Astrocyte of the cerebellum (primary cell): ENCODE measurements at regions of chr11 and their contacts with region 1.

Region 1: DNA sequence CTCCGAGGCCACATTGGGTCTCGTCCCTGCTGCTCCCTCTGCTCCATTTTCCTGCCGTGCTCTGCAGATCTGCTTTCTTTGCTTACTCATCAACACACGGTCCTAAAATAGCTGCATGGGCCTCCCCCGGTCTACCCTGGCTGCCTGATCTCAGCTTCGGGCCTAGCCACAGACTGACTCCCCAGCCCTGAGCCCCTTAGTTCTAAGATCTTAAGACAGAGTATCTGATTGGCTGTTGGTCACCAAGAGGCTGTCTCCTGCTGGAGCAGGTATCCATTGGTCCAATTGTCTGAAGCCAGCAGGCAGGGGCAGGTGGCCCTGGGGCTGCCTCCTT is 53.7 kb upstream of the NECTIN1 start:
- DNase-seq: no peak
- H3K4me3 ChIP-seq: no peak overlapping the region
- CTCF ChIP-seq: no peak

Region 2: GRCh38 chr11:119728651-119729580 is 53.8 kb before region 1 on chr11 and contains the start of gene NECTIN1:
- in situ Hi-C with region 1: no loop called
- DNase-seq: peak; percentile 48
- H3K4me3 ChIP-seq: peak within 1 kb of the TSS; percentile 64
- CTCF ChIP-seq: peak; percentile 77

Region 3: DNA sequence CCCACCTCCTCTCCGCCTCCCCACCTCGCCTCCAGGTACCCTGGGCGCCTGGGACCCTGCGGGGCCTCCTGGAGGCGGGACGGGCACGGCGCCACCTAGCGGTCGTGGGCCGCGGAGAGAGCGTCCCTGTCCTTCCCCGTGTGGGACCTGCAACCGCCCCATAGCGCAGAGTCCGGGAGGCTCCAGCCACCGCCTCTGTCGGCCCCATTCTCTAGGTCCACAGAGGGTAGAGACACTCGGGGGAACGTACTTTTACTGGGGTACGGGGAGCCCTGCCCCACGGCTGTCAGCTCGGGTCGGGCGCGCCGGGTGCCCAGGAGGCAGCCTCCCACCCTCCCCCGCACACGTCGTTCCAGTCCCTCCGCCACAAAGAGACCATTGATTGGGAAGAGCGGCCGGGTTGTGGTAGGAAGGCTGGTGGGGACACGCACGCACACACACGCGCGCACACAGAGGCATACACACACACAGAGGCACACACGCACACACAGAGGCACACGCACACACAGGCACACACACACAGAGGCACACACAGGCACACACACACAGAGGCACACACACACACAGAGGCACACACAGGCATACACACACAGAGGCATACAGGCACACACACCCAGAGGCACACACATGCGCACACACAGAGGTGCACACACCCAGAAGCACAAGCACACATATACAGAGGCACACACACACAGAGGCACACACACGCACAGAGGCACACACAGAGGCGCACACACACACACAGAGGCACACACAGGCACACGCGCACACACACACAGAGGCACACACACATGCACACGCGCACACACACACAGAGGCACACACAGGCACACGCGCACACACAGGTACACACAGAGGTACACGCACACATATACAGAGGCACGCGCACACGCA is 41.1 kb before region 1 on chr11:
- in situ Hi-C with region 1: no loop called
- DNase-seq: no peak
- H3K4me3 ChIP-seq: no peak overlapping the region
- CTCF ChIP-seq: peak; percentile 66

Region 4: GRCh38 chr11:119874660-119875238 is 92.0 kb after region 1 on chr11:
- in situ Hi-C with region 1: loop called (anchors 5 kb)
- DNase-seq: no peak
- H3K4me3 ChIP-seq: no peak overlapping the region
- CTCF ChIP-seq: no peak

Region 5: DNA sequence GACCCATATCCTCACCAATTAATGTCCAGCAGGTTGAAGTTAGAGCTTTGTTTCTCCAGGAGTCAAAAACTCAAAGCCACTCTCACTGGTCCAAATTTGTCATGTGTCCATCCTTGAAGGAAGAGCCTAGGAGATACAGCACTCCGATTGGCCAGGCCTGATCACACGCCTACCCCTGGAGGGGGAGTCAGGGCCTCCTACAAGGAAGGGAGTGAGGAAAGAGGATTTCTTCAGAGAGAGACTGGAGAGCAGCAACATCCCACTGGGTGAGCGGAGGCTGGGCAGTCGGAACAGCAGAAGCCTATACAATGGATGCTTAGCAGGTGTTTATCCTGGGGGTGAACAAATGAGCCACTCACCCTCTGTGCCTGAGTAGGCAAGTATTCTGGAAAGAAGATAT is 241.3 kb after region 1 on chr11:
- in situ Hi-C with region 1: no loop called
- DNase-seq: no peak
- H3K4me3 ChIP-seq: no peak overlapping the region
- CTCF ChIP-seq: no peak

Region 6: DNA sequence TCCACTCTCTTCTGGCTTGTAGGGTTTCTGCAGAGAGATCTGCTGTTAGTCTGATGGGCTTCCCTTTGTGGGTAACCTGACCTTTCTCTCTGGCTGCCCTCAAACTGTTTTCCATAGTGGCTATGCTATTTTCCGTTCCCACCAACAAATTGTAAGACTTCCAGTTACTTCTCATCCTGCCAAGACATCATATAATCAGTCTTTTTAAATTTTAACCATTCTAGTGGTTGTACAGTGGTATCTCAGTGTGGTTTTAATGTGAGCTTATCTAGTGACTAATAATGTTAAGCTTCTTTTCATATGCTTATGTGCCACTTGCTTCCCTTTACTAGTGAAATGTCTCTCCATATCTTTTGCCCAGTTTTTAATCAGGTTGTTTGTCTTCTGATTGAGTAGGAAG is 368.8 kb after region 1 on chr11:
- in situ Hi-C with region 1: no loop called
- DNase-seq: no peak
- H3K4me3 ChIP-seq: no peak overlapping the region
- CTCF ChIP-seq: no peak